Heart left ventricle (tissue), 16 donors: ENCODE measurements at regions of chr22 and their contacts with region 1.

Region 1: GRCh38 chr22:35627264-35628041 is 10.3 kb upstream of the MB start:
- DNase-seq: peak; percentile 83 to 86 (median 85)
- ATAC-seq: peak; percentile 62 to 81 (median 70)
- H3K4me3 ChIP-seq: peak overlapping the region; percentile 15 to 69 (median 58)
- H3K27ac ChIP-seq: peak overlapping the region; percentile 14 to 91 (median 82)
- H3K4me1 ChIP-seq: peaks cover 0 to 36% (median 10%) of the 10 kb centered on the region in 12 donors
- H3K27me3 ChIP-seq: no peaks in the 10 kb centered on the region
- CTCF ChIP-seq: peak; percentile 35 to 77 (median 62)
- POLR2A ChIP-seq: peak in 1 of 2 donors; percentile 35

Region 2: DNA sequence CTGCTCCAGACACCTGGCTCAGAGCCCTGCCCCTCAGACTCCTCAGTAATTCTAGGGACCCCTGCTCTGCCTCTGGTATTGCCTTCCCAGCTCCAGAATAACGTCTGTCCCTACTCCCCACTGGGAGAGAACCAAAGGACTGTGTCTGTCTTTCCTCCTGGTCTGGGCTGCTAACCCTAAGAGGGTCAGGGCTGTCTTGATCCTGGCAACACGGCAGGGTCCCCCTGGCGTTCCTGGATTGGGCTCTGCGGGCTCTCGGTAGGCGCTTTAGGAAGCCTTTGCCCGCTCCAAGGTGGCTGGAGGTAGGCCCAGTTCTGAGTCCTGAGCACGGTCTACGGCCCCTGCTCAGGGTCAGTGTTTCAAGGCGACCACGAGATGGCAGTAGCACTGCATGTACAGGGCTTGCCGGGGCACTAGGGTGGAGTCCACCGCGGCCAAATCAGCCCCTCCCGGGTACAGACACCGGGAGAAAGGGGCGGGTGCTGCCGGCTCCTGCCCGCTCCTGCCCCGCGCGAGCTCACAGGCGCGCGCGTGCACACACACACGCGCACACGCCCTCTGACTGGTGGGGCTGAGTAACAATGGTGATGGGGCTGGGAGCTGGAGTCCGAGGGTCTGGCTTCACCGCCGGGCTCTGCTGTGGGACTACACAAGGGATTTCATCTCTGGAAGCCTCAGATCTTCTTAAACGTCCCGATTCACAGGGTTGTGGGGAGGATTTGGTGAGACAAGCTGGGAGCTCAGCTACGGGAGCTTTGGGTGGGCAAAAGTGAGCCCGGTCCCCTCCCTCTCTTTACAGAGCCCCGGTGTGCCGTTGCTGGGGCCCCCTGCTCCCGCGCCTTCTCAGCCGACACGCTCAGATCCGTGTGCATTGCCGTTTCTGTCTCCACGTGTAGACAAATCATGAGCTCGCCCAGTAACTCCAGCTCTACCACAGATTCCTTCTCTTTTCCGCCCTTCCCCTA is 276.6 kb before region 1 on chr22:
- intact Hi-C with region 1: loop called in 4 of 10 experiments (anchors 1 to 10 kb)
- DNase-seq: peak; percentile 93 to 96 (median 94)
- ATAC-seq: peak; percentile 89 to 90 (median 90)
- H3K4me3 ChIP-seq: peak overlapping the region; percentile 27 to 69 (median 55)
- H3K27ac ChIP-seq: peak overlapping the region in 11 of 12 donors; percentile 51 to 93 (median 68)
- H3K4me1 ChIP-seq: peaks cover 0 to 47% (median 11%) of the 10 kb centered on the region in 12 donors
- H3K27me3 ChIP-seq: no peaks in the 10 kb centered on the region
- CTCF ChIP-seq: peak; percentile 81 to 99 (median 92)
- POLR2A ChIP-seq: peak in 1 of 2 donors; percentile 48

Region 3: GRCh38 chr22:35458547-35459422 is 168.7 kb before region 1 on chr22:
- intact Hi-C with region 1: no loop called
- DNase-seq: no peak
- ATAC-seq: peak in 1 of 4 donors; percentile 22
- H3K4me3 ChIP-seq: no peak overlapping the region
- H3K27ac ChIP-seq: no peak overlapping the region
- H3K4me1 ChIP-seq: no peaks in the 10 kb centered on the region
- H3K27me3 ChIP-seq: no peaks in the 10 kb centered on the region
- CTCF ChIP-seq: no peak
- POLR2A ChIP-seq: no peak

Region 4: DNA sequence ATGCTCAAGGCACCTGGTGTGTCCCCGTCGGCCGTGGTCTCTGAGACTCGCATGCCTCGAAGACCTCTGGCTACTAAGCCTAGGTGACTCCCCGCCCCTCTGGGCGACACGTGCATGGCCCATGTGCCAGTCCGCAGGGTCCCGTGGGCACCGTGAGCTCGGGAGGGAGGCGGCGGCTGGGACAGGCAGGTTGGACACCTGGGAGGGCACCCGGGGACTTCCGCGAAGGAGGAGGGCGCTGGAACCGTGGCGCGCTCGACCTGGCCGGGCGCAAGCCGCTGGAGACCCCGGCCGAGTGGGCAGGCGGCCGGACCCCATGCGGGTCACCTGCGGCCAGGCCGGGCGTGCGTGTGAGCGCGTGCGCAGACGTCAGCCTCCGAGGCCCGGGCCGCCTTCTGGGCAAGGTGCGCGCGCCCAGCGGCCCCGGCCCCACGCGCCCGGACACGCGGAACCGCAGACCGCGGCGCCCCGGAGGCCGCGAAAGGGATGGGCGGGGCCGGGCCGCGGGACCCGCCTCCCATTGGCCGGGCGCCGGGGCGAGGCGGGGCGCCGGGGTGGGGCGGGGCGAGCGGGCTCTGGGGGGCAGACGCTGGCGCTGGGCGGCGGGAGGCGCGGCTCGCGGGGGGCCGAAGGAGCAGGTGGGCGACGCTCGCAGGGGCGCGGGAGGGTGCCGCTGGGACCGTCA is 87.4 kb before region 1 on chr22:
- intact Hi-C with region 1: loop called in 1 of 10 experiments (anchors 10 kb)
- DNase-seq: peak; percentile 61 to 86 (median 65)
- ATAC-seq: peak in 3 of 4 donors; percentile 65 to 86 (median 72)
- H3K4me3 ChIP-seq: peak overlapping the region; percentile 36 to 70 (median 58)
- H3K27ac ChIP-seq: peak overlapping the region in 11 of 12 donors; percentile 56 to 89 (median 60)
- H3K4me1 ChIP-seq: peaks cover 3 to 42% (median 17%) of the 10 kb centered on the region in 12 donors
- H3K27me3 ChIP-seq: peaks cover 0 to 36% (median 0%) of the 10 kb centered on the region in 9 donors
- CTCF ChIP-seq: no peak
- POLR2A ChIP-seq: no peak

Region 5: DNA sequence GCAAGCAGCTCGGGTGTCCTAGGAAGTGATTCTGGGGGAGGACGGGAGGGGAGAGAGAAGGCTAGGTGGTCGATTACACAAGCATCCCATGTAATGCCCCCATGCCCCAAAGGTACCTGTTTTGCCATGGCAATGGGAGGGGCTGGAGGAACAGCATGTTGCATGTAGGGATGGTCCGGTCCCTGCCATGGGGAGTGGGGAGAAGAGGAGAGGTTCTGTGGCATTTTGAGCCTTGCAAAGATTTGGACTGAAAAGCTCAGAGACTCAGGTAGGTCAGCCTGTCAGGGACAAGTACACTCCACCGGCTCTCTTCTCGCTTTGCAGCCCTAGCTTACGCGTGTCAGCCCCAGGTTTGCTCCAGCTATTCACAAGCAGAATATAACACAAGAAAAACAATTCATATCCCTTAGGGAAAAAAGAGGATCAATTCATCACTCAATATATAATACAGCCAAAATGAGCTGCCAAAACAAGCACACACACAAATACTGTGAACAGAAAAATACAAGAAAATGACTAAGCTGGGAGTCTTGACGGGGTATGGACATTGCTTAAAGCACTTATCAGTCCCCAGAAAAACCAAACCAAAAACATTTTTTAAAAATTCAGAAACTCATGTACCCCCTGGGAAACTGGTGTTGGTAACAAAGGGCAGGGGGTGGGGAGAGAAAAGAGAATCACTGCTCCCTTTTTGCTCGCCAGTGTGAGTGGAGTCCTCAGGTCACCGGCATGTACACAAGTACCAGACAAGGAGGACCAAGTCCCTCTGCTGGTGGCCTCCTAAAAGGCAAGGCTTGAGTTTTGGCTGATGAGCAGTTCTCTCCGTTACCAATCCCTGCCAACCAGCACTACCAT is 111.8 kb after region 1 on chr22:
- intact Hi-C with region 1: loop called in 8 of 10 experiments (anchors 5 to 10 kb)
- DNase-seq: no peak
- ATAC-seq: peak in 2 of 4 donors; percentile 34
- H3K4me3 ChIP-seq: no peak overlapping the region
- H3K27ac ChIP-seq: peak overlapping the region in 1 of 12 donors; percentile 7
- H3K4me1 ChIP-seq: peaks cover 0 to 43% (median 26%) of the 10 kb centered on the region in 12 donors
- H3K27me3 ChIP-seq: no peaks in the 10 kb centered on the region
- CTCF ChIP-seq: peak in 8 of 12 donors; percentile 20 to 41 (median 31)
- POLR2A ChIP-seq: no peak

Region 6: GRCh38 chr22:35840302-35840739 is 212.9 kb after region 1 on chr22:
- intact Hi-C with region 1: loop called in 9 of 10 experiments (anchors 5 to 10 kb)
- DNase-seq: peak; percentile 83 to 92 (median 85)
- ATAC-seq: peak; percentile 63 to 91 (median 84)
- H3K4me3 ChIP-seq: peak overlapping the region; percentile 5 to 63 (median 50)
- H3K27ac ChIP-seq: peak overlapping the region in 11 of 12 donors; percentile 44 to 85 (median 77)
- H3K4me1 ChIP-seq: peaks cover 5 to 78% (median 50%) of the 10 kb centered on the region in 12 donors
- H3K27me3 ChIP-seq: no peaks in the 10 kb centered on the region
- CTCF ChIP-seq: no peak
- POLR2A ChIP-seq: no peak

Region 7: DNA sequence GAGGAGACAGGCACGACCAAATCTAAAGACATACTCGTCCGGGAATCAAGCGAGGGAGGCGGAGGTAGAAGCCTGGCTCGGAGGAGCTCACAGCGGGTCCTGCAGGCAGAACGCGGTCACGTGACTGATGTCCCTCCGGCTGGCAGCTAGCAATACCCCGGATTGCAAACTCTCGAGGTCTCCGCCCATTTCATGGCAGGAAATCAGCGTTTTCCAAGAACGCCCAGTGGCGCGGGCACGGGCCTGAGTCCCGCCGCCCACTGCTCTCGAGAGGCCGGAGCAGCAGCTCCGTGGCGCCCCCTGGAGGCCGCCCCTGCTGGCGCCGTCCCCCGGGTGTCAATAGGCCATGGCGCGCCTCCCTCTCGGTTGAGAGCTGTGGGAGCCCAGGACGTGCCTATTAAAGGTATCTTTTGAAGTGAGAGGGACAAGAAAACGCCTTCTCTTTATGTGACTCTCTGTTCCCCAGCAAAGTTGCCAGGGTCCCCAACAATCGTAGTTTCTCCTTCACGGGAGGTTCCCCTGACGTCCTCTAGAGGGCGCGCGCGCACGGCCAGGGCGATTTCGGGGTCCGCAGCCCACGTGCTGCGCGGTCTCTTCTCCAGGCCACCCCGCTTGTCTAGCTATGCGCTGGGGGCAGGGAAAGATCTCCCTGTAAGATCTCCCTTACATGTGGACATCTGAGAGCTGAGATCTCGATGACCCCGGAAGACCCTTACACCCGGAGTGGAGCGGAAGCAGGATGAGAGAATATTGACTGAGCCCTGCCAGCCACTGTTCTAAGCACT is 438.5 kb after region 1 on chr22:
- intact Hi-C with region 1: loop called in 3 of 10 experiments (anchors 5 to 10 kb)
- DNase-seq: peak; percentile 88 to 94 (median 92)
- ATAC-seq: peak; percentile 92 to 94 (median 93)
- H3K4me3 ChIP-seq: peak overlapping the region; percentile 15 to 69 (median 58)
- H3K27ac ChIP-seq: peak overlapping the region; percentile 72 to 91 (median 82)
- H3K4me1 ChIP-seq: peaks cover 0 to 18% (median 6%) of the 10 kb centered on the region in 12 donors
- H3K27me3 ChIP-seq: no peaks in the 10 kb centered on the region
- CTCF ChIP-seq: peak; percentile 100
- POLR2A ChIP-seq: peak in 1 of 2 donors; percentile 32